Mammary epithelial cell (primary cell): ENCODE measurements at regions of chr1 and their contacts with region 1.

Region 1: GRCh38 chr1:3785456-3786157 is 10.7 kb downstream of the LRRC47 start:
- DNase-seq: peak; percentile 36
- H3K4me3 ChIP-seq: no peak overlapping the region
- H3K27ac ChIP-seq: no peak overlapping the region
- H3K4me1 ChIP-seq: no peaks in the 10 kb centered on the region
- H3K27me3 ChIP-seq: no peaks in the 10 kb centered on the region
- CTCF ChIP-seq: peak; percentile 42 to 53

Region 2: DNA sequence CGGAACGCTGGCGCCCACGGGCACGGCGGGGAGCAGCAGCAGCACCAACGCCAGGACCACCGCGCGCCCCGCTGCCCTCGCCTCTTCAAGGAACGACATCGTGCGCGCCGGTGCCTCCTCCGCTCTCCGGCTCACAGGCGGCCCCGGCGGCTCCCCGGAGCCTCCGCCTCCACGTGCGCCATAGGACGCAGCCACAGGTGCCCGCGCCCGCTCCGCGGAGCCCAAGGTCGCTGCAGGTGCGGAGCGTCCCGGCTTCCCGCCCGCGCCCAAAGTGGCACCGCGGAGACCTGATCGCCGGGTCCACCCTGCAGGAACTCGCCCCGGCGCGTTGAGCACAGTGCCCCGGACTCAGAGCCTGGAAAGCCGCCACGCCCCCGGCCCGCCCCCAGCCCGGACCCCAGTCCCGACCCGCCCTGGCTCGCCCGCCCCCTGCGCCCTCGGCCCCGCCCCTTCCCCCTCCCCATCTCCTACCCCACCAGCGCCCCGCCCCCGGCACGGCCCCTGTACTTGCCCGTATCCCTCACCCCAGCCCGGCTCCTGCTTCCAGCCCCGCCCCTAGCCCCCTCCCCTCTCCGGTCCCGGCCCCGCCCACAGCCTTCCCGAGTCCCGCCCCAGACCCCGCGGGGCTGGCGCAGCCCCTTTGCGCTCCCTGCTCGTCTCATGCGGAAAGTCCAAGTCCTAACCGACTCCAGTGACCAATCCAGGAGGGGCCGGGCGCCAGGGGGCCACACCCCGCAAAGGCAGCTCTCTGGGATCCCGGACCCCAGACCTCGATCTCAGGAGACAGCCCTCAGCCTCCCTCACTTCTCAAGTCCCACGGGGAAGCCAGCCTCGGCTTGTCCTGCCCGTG is 174.2 kb before region 1 on chr1 and contains the start of gene MEGF6:
- CTCF ChIA-PET with region 1: no interaction called
- dilution Hi-C with region 1: no loop called
- in situ Hi-C with region 1: no loop called
- intact Hi-C with region 1: no loop called
- DNase-seq: no peak
- H3K4me3 ChIP-seq: peak within 1 kb of the TSS in 1 of 3 experiments; percentile 5
- H3K27ac ChIP-seq: no peak within 1 kb of the TSS
- H3K4me1 ChIP-seq: peaks cover 24% of the 10 kb centered on the region
- H3K27me3 ChIP-seq: peaks cover 3% of the 10 kb centered on the region
- CTCF ChIP-seq: no peak
- total RNA-seq, gene MEGF6: 0.82 to 29.2 TPM

Region 3: GRCh38 chr1:3732434-3733093 is 53.0 kb before region 1 on chr1:
- CTCF ChIA-PET with region 1: no interaction called
- dilution Hi-C with region 1: no loop called
- in situ Hi-C with region 1: no loop called
- intact Hi-C with region 1: no loop called
- DNase-seq: no peak
- H3K4me3 ChIP-seq: no peak overlapping the region
- H3K27ac ChIP-seq: no peak overlapping the region
- H3K4me1 ChIP-seq: no peaks in the 10 kb centered on the region
- H3K27me3 ChIP-seq: no peaks in the 10 kb centered on the region
- CTCF ChIP-seq: no peak

Region 4: GRCh38 chr1:3831433-3832088 is 46.0 kb after region 1 on chr1:
- CTCF ChIA-PET with region 1: no interaction called
- dilution Hi-C with region 1: loop called (anchors 5 kb)
- in situ Hi-C with region 1: no loop called
- intact Hi-C with region 1: no loop called
- DNase-seq: no peak
- H3K4me3 ChIP-seq: no peak overlapping the region
- H3K27ac ChIP-seq: no peak overlapping the region
- H3K4me1 ChIP-seq: no peaks in the 10 kb centered on the region
- H3K27me3 ChIP-seq: no peaks in the 10 kb centered on the region
- CTCF ChIP-seq: no peak

Region 5: DNA sequence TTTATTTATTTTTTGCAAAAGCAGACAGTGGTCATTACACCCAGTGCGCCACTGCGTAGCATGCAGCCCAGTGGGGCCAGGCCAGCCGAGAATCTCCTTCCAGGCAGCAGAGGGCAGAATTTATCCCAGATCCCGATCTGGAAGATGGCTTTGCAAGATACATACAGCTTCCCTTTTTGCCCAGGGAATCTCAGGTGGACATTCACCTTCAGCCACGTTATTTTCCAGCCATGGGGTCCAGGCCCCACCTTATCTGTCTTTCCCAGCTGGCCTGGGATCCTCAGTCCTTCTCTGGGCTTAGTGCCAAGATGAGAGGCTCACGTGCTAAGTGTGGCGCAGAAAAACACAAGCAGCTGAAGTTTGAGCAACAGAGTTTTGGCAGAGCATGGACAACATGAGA is 992.4 kb after region 1 on chr1:
- CTCF ChIA-PET with region 1: no interaction called
- dilution Hi-C with region 1: no loop called
- in situ Hi-C with region 1: no loop called
- intact Hi-C with region 1: no loop called
- DNase-seq: no peak
- H3K4me3 ChIP-seq: no peak overlapping the region
- H3K27ac ChIP-seq: no peak overlapping the region
- H3K4me1 ChIP-seq: no peaks in the 10 kb centered on the region
- H3K27me3 ChIP-seq: no peaks in the 10 kb centered on the region
- CTCF ChIP-seq: peak; percentile 10 to 39